Left ventricle myocardium superior (tissue), 1 donor: ENCODE measurements at regions of chr6 and their contacts with region 1.

Region 1: DNA sequence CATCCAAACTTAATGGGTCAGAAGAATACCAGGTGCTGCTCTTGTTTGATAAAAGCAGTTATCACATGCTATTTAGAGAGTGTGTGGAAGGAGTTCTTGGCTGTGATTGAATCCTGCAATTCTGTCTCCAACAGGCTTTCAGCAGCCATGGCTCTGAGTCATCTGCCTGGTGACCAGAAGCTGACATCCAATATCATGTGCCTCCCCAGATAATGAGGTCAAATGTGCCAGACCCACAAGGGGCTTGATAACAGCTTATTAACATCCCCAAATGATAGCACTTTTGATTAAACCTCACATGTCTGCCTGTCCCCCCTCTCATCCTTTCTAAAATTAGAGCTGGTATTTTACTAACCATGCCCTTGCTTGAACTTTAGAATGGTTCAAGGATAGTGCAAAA is 175.7 kb upstream of the PLN start:
- DNase-seq: peak; percentile 60
- ATAC-seq: peak; percentile 92

Region 2: GRCh38 chr6:118509009-118509617 is 136.7 kb after region 1 on chr6:
- intact Hi-C with region 1: loop called (anchors 10 kb)
- DNase-seq: peak; percentile 45
- ATAC-seq: peak; percentile 27

Region 3: DNA sequence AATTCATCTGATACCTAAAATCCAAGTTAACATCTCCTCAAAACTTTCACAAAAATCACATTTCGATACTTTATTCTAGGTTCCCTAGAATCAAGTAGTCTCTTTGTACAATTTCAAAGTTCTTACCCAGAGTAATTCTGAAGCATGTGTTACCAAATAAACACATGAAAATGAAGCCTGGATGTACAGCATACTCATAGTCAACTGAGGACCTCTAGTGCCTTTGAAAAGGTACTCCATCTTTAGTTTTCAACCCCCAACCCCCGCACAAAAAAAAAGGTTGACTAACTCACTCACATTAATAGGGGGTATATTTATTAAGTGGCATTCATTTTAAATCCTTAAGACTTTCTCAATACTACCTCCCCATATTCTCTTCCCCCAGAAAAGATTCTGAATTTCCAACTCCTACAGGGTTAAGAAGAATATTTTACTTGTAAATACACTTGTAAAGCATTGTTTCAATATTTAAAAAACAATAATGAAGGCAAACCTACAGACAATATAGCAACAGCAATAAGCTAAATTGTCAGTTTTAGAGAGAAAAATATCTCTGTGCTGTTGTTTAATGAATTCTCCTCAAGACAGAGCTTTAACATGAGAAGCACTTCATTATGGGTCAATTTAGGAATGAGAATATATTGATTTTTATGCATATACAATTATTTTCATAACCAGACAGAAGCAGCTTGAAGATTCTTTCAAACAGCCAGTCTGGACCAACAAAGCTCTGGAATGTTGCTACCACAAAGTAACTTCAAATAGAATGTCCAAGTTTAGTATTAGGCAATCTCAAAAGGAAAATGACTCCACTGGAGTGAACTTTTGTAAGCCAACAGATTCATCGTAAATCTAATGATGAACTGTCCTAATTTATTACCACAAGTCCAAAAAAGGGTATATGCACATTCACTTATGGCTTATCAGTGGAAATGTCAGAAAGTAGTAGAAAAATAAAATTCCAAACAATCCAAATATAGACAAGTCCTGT is 178.9 kb after region 1 on chr6:
- intact Hi-C with region 1: loop called (anchors 5 kb)
- DNase-seq: no peak
- ATAC-seq: peak; percentile 55

Region 4: GRCh38 chr6:118810420-118811027 is 438.1 kb after region 1 on chr6:
- intact Hi-C with region 1: no loop called
- DNase-seq: no peak
- ATAC-seq: no peak